Transverse colon (tissue), 4 donors: ENCODE measurements at regions of chr18 and their contacts with region 1.

Region 1: GRCh38 chr18:72086421-72086820 is 457.7 kb downstream of the CBLN2 start:
- DNase-seq: no peak
- H3K4me3 ChIP-seq: no peak overlapping the region
- H3K27ac ChIP-seq: no peak overlapping the region
- H3K4me1 ChIP-seq: no peaks in the 10 kb centered on the region
- H3K27me3 ChIP-seq: no peaks in the 10 kb centered on the region
- CTCF ChIP-seq: peak in 4 of 5 experiments; percentile 10 to 25 (median 16)
- EP300 ChIP-seq: no peak
- POLR2A ChIP-seq: no peak

Region 2: GRCh38 chr18:71899707-71900472 is 186.5 kb before region 1 on chr18:
- in situ Hi-C with region 1: no loop called
- intact Hi-C with region 1: no loop called
- DNase-seq: no peak
- H3K4me3 ChIP-seq: no peak overlapping the region
- H3K27ac ChIP-seq: no peak overlapping the region
- H3K4me1 ChIP-seq: no peaks in the 10 kb centered on the region
- H3K27me3 ChIP-seq: no peaks in the 10 kb centered on the region
- CTCF ChIP-seq: no peak
- EP300 ChIP-seq: no peak
- POLR2A ChIP-seq: no peak

Region 3: DNA sequence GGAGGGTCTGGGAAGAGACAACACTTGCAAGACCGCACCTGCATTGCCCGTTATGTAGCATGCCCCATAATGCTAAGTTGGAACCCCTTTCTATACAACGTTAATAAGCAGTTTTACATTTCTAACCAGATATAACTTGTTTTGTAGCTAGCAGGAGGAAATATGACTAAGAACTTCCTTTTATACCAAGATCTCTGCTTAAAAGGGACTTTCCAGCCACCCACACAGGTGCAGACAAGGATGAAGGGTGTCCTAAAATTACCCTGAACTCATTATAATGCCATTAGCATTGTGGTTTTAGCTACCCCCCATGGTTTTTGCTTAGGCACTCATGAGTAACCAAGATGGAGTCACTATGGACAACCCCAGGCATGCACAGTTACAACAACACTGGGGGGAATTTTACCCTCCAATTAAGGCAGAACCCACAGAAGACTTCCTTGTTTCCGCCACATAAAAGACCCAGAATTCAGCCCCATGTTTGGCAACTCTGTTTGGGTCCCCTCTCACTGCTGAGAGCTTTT is 94.9 kb after region 1 on chr18:
- in situ Hi-C with region 1: loop called in 1 of 4 experiments (anchors 25 kb)
- intact Hi-C with region 1: no loop called
- DNase-seq: no peak
- H3K4me3 ChIP-seq: no peak overlapping the region
- H3K27ac ChIP-seq: no peak overlapping the region
- H3K4me1 ChIP-seq: no peaks in the 10 kb centered on the region
- H3K27me3 ChIP-seq: no peaks in the 10 kb centered on the region
- CTCF ChIP-seq: no peak
- EP300 ChIP-seq: no peak
- POLR2A ChIP-seq: no peak